ENCODE measurements at regions of chr15 and their contacts with region 1.

Region 1: DNA sequence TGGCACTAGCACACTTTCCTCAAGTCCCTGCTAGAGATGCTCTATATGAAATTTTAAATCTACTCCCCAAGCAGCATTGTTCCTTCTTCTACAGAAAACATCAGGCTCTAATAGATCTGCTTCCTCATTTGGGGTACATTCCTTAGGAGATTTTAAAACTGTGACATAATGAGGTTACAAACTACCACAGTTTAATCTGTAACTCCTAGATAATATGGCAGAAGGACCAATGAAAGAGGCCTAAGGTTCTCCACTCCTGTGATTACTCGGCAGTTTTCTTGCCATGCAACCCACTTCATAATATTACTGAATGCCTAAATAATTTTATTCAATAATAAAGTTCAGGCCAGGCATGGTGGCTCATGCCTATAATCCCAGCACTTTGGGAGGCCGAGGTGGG is 16.1 kb downstream of the ZNF106 start:
- DNase-seq: no peak
- H3K4me3 ChIP-seq: no peak overlapping the region
- H3K27ac ChIP-seq: peak overlapping the region in 1 of 5 donors; percentile 32
- H3K4me1 ChIP-seq: peaks cover 0 to 16% of the 10 kb centered on the region in 2 donors
- H3K27me3 ChIP-seq: no peaks in the 10 kb centered on the region
- CTCF ChIP-seq: no peak
- POLR2A ChIP-seq: no peak

Region 2: GRCh38 chr15:42427429-42428223 is 47.2 kb before region 1 on chr15:
- intact Hi-C with region 1: no loop called
- DNase-seq: no peak
- H3K4me3 ChIP-seq: no peak overlapping the region
- H3K27ac ChIP-seq: no peak overlapping the region
- H3K4me1 ChIP-seq: no peaks in the 10 kb centered on the region
- H3K27me3 ChIP-seq: no peaks in the 10 kb centered on the region
- CTCF ChIP-seq: no peak
- POLR2A ChIP-seq: no peak

Region 3: DNA sequence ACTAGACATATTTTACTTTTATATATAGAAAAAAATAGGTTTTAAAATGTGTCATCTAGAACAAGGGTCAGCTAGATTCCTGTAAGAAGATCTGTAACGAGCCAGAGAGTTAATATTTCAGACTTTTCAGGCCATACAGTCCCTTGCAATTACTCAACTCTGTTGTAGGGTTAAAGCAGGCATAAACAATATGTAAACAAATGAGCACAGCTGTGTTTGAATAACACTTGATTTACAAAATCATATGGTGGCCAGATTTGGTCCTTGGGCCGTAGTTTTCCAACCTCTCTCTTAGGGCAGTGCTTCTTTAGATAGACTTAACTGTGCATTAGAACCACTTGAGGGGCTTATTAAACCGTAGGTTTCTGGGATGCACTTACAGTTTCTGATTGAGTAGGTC is 54.1 kb after region 1 on chr15:
- intact Hi-C with region 1: no loop called
- DNase-seq: no peak
- H3K4me3 ChIP-seq: no peak overlapping the region
- H3K27ac ChIP-seq: no peak overlapping the region
- H3K4me1 ChIP-seq: no peaks in the 10 kb centered on the region
- H3K27me3 ChIP-seq: no peaks in the 10 kb centered on the region
- CTCF ChIP-seq: no peak
- POLR2A ChIP-seq: no peak

Region 4: GRCh38 chr15:42640103-42640502 is 165.3 kb after region 1 on chr15:
- intact Hi-C with region 1: loop called in 1 of 2 experiments (anchors 10 kb)
- DNase-seq: no peak
- H3K4me3 ChIP-seq: no peak overlapping the region
- H3K27ac ChIP-seq: no peak overlapping the region
- H3K4me1 ChIP-seq: no peaks in the 10 kb centered on the region
- H3K27me3 ChIP-seq: no peaks in the 10 kb centered on the region
- CTCF ChIP-seq: no peak
- POLR2A ChIP-seq: no peak

Measured in adrenal gland (tissue), 19 donors.